ENCODE measurements at regions of chr6 and their contacts with region 1.

Region 1: GRCh38 chr6:91697010-91697694 is 1110.3 kb upstream of the MAP3K7 start:
- DNase-seq: no peak
- H3K4me3 Mint-ChIP-seq: no peak overlapping the region
- H3K27ac Mint-ChIP-seq: no peak overlapping the region
- H3K4me1 Mint-ChIP-seq: no peaks in the 10 kb centered on the region
- H3K27me3 Mint-ChIP-seq: no peaks in the 10 kb centered on the region
- CTCF ChIP-seq: no peak

Region 2: GRCh38 chr6:91669154-91669870 is 27.8 kb before region 1 on chr6:
- CTCF ChIA-PET with region 1: no interaction called
- intact Hi-C with region 1: no loop called
- DNase-seq: no peak
- H3K4me3 Mint-ChIP-seq: no peak overlapping the region
- H3K27ac Mint-ChIP-seq: no peak overlapping the region
- H3K4me1 Mint-ChIP-seq: no peaks in the 10 kb centered on the region
- H3K27me3 Mint-ChIP-seq: no peaks in the 10 kb centered on the region
- CTCF ChIP-seq: no peak

Region 3: GRCh38 chr6:91715171-91715805 is 18.1 kb after region 1 on chr6:
- CTCF ChIA-PET with region 1: no interaction called
- intact Hi-C with region 1: loop called (anchors 1 kb)
- DNase-seq: no peak
- H3K4me3 Mint-ChIP-seq: no peak overlapping the region
- H3K27ac Mint-ChIP-seq: no peak overlapping the region
- H3K4me1 Mint-ChIP-seq: no peaks in the 10 kb centered on the region
- H3K27me3 Mint-ChIP-seq: no peaks in the 10 kb centered on the region
- CTCF ChIP-seq: no peak